ENCODE measurements at regions of chr5 and their contacts with region 1.

Region 1: DNA sequence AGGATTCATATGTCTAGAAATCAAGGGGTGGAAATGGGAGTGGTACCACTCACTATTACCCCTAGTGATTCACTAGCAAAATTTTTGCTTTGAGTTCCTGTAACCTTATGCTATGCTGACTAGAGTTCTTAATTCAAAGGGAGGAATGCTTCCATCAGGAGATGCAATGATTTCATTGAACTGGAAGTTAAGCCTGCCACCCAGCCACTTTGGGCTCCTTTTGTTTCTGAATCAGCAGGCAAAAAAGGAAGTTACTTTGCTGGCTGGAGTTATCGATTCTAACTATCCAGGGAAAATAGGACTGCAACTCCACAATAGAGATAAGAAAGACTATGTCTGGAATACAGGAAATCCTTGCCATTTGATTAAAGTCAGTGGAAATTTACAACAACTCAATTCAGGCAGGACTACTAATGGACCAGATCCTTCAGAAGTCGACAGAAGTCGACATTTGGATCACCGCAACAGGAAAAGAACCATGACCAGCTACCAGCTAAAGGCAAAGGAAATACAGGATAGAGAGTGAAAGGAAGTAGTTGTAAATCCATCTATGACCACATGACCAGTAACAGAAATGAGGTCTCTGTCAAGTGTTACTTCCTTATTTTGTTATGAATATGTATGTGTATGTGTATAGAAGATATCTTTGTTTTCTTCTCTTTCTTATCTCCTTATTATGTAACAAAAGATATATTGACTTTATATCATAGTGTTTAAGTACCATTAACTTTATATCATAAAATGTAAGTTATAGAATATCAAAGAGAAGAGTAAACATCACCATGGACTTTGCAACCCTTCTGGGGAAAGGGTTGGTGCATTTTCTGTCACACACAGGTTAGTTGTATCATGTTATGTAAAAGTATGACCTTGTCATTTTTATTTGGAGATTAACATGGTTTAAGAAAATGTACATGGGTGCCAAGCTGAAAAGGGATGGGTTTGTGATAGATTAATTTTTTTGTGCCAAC is 198.7 kb upstream of the HAPLN1 start:
- DNase-seq: peak in 1 of 3 donors; percentile 28
- ATAC-seq: peak; percentile 93
- H3K4me3 ChIP-seq: no peak overlapping the region
- H3K4me1 ChIP-seq: peaks cover 12% of the 10 kb centered on the region
- CTCF ChIP-seq: no peak

Region 2: GRCh38 chr5:83662558-83662957 is 256.8 kb before region 1 on chr5:
- intact Hi-C with region 1: no loop called
- DNase-seq: no peak
- ATAC-seq: no peak
- H3K4me3 ChIP-seq: no peak overlapping the region
- H3K4me1 ChIP-seq: no peaks in the 10 kb centered on the region
- CTCF ChIP-seq: no peak

Region 3: DNA sequence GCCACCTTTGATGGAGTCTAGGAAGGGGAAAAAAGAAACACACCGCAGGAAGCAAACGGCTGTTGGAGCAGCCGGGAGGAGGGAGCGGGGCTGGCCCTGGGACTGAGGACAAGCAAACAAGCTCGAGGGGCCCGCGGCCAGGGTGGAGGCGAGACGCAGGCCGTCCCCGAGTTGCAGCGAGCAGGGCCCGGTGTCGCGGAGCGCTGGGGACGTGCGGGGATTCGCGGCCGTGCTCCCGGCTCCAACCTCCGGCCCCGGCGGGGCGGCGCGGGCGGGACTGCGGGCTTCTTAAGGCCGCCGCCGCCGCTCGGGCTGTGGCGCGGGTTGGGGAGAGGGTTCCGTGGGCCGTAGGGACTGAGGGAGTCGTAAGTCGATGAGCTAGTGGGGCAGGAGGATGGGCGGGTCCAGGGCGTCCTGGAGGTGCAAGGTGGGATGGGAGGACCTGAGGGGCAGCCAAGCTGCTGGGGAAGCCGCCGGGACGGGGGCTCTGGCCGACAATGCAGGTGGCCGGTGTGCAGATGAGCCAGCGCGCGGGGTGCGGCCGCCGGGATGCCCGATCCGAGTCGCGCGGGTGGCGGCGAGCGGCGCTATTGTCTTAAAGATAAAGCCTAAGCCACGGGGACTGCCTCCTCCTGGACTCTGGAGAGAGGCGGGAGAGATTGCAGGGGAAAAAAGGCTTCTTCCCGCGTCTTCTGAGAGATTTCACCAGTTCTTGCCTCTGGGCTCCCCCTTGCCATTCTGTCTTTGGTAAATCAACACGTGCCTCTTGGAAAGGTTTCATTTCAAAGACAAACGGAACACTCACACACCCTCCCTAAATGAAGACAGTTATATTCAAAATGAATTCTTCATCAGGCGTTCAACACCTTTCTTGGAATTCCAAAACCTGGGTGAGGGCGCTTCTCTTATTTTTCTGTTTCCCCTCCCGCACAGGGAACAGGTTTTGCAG is 197.1 kb before region 1 on chr5:
- intact Hi-C with region 1: loop called in 1 of 2 experiments (anchors 10 kb)
- DNase-seq: peak; percentile 82 to 92 (median 91)
- ATAC-seq: peak; percentile 91
- H3K4me3 ChIP-seq: peak overlapping the region; percentile 31
- H3K4me1 ChIP-seq: no peaks in the 10 kb centered on the region
- CTCF ChIP-seq: peak; percentile 27

Measured in mucosa of descending colon (tissue), 3 donors.